Activated CD4-positive, alpha-beta memory T cell treated with anti-CD3 and anti-CD28 coated beads for 36 hours (primary cell): ENCODE measurements at regions of chr1 and their contacts with region 1.

Region 1: DNA sequence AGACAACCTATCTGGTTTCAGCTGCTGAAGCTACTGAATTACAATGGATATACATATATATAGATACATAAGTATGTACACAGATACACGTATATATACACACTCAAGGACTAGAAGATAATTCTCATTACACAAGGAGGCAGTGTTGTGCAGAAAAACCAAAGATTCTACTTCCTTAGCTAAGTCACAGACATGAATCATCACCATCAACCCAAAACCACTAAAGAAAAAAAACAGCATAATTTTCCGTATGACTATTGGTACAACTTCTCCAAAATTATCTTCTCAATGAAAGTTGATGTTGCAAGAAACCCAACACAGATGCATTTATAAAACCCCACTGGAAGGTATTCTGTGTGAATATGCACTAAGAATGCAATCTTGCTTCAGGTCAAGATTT is 36.8 kb upstream of the RPF1 start:
- DNase-seq: no peak
- H3K4me3 Mint-ChIP-seq: peak overlapping the region; percentile 0
- H3K27ac Mint-ChIP-seq: no peak overlapping the region
- H3K4me1 Mint-ChIP-seq: peaks cover 19% of the 10 kb centered on the region
- H3K27me3 Mint-ChIP-seq: peaks cover 2% of the 10 kb centered on the region

Region 2: DNA sequence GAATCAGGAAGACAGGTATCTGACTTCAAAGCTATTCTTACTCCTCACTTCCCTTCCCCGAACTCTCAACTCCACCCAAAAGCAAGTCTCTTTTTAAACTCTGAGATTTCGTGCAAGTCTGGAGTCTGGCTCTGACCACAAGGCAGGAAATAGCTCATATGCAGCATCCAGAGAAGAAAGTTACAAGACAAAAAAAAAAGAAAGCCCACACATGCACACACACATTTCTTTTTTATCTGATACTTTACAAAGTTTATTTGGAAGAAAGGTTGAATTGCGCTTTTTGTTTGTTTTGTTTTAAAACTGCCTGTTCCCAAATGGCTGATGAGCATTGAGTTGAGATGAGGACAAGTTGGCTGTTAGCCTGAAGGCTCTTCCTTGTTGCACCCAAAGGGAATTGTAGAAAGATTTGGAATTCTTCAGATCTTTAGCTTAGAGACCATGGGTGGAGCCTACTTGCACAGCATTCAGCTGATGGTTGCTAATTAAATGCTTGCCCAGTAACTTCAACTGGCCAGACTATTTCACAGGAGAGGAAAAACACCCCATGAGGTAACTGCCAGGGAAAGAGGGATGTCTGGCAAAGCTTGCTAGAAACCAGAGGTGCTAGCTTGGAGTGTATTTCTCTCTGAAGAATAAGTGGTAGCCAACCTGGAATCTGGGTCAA is 933.6 kb before region 1 on chr1:
- CTCF ChIA-PET with region 1: no interaction called
- POLR2A ChIA-PET with region 1: no interaction called
- intact Hi-C with region 1: loop called (anchors 10 kb)
- DNase-seq: peak; percentile 57
- H3K4me3 Mint-ChIP-seq: peak overlapping the region; percentile 33
- H3K27ac Mint-ChIP-seq: peak overlapping the region; percentile 82
- H3K4me1 Mint-ChIP-seq: peaks cover 35% of the 10 kb centered on the region
- H3K27me3 Mint-ChIP-seq: no peaks in the 10 kb centered on the region

Region 3: DNA sequence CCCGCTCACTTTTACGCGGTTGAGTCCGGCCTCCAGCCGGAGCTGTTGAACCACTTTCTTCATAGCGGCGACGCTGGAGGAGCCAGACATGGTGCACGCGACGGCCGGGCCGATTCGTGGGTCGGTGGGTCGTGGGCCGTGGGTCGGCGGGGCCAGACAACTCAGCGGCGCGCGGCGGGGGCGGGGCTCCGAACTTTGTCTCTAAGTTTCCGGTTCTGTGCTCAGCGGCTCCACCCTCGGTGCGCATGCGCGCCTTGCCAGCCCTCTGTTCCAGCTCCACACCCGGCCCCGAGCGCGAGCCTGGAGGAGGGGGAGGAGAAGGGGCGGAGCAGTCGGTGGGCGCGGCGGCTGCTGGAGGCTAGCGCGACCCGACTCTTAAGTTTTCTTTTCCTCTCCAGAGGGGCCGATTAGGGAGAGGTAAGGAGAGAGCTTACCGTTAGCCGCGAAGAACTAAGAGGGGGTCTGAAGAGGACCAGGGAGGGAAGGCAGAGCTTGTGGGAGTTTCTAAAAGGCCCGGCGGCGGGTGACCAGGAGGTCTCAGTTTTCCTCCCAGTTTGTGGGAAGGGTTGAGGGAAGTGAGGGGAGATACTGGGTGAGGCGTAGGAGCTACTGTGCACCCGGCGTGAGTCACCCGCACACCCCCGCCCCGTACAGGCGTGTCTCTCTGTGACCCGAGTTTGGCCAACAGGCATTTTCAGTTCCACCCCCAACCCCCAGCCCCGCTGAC is 63.9 kb after region 1 on chr1 and contains the starts of genes GNG5 and SPATA1:
- CTCF ChIA-PET with region 1: interaction called, 6 read pairs
- POLR2A ChIA-PET with region 1: interaction called, 4 read pairs
- intact Hi-C with region 1: loop called (anchors 1 kb)
- DNase-seq: peak; percentile 98
- H3K4me3 Mint-ChIP-seq: peak within 1 kb of the TSS; percentile 95
- H3K27ac Mint-ChIP-seq: peak within 1 kb of the TSS; percentile 97
- H3K4me1 Mint-ChIP-seq: peaks cover 35% of the 10 kb centered on the region
- H3K27me3 Mint-ChIP-seq: no peaks in the 10 kb centered on the region
- total RNA-seq, gene GNG5: 139 to 143 TPM
- total RNA-seq, gene SPATA1: 3.2 to 3.8 TPM

Region 4: DNA sequence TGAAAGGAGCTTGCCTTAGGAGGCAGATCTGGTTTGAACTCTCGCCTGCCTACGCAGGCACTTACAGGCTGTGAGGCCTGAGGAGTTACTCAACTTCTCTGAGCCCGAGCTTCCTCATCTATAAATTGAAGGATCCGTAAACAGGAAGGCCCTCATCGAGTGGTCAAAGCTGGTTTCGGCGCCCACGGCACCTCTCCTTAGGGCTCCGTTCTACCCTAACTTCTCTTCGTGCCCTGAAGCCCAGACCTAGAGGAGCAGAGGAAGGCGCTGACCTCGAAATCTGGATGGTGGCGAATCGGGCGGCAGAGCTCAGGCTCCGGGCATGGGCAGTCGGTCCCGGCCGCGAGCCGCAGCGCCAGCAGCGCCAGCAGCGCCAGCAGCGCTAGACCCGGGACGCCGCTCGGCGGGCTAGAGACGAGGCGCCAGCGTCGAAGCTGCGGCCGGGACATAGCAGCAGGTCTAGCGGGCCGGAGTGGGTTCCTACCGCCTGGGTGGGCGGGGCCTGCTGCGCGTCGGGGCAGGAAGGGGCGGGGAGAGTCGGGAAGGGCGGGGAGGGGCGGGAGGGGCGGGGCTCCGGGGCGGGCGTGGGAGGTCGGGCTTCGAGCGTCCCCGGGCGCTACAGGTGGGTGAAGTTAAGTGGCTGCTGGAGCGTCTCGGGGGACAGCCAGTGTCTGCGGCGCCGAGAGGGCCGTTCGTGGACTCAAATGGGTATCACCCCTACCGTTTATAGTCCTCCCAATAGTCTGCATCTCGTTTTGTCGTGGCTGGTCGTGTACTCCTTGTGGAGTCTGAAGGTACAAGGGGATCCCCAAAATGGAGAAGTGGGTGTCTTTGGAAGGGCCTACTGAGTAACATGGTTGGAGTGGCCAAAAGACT is 131.9 kb after region 1 on chr1 and contains the start of gene CTBS:
- CTCF ChIA-PET with region 1: interaction called, 12 read pairs
- POLR2A ChIA-PET with region 1: interaction called, 4 read pairs
- intact Hi-C with region 1: loop called (anchors 1 kb)
- DNase-seq: peak; percentile 90
- H3K4me3 Mint-ChIP-seq: peak within 1 kb of the TSS; percentile 98
- H3K27ac Mint-ChIP-seq: peak within 1 kb of the TSS; percentile 100
- H3K4me1 Mint-ChIP-seq: peaks cover 35% of the 10 kb centered on the region
- H3K27me3 Mint-ChIP-seq: peaks cover 1% of the 10 kb centered on the region
- total RNA-seq, gene CTBS: 22.9 to 24.2 TPM

Region 5: GRCh38 chr1:84758968-84759491 is 316.8 kb after region 1 on chr1:
- CTCF ChIA-PET with region 1: interaction called, 35 read pairs
- POLR2A ChIA-PET with region 1: no interaction called
- intact Hi-C with region 1: no loop called
- DNase-seq: peak; percentile 34
- H3K4me3 Mint-ChIP-seq: peak overlapping the region; percentile 9
- H3K27ac Mint-ChIP-seq: no peak overlapping the region
- H3K4me1 Mint-ChIP-seq: peaks cover 7% of the 10 kb centered on the region
- H3K27me3 Mint-ChIP-seq: peaks cover 8% of the 10 kb centered on the region

Region 6: DNA sequence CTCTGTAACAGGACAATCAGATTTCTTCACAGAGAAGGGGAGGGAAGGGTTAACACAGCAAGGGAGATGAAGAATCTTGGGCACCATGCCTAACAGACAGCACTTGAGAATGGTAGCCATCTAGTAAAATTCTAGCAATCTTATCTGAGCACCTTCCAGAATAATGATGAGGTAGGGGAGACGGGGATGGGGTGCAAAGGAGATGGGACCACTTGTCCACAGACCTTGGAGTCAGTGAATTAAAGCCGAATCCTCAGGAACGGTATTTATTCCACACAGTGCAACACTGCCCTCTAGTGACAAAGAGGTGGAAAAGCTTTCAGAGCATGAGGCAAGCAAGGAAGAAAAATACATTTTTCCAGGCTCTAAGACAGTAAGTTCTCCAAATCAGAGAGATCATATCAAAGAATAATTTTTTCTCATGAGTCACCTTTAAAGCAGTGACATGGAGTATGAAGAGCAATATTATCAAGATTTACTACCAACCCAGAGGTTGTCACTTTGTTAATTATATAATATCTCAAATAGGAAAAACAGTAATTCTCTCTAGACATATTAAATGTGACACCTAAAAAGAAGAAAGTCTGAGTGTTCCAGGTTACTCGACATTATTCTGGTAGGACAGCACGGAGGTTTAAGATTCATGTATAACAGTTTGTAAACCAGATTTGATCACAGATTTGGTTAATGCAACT is 494.0 kb after region 1 on chr1:
- CTCF ChIA-PET with region 1: interaction called, 11 read pairs
- POLR2A ChIA-PET with region 1: no interaction called
- intact Hi-C with region 1: loop called (anchors 1 kb)
- DNase-seq: peak; percentile 27
- H3K4me3 Mint-ChIP-seq: no peak overlapping the region
- H3K27ac Mint-ChIP-seq: no peak overlapping the region
- H3K4me1 Mint-ChIP-seq: peaks cover 4% of the 10 kb centered on the region
- H3K27me3 Mint-ChIP-seq: no peaks in the 10 kb centered on the region